Activated CD4-positive, alpha-beta T cell treated with anti-CD3 and anti-CD28 coated beads for 36 hours (primary cell): ENCODE measurements at regions of chr18 and their contacts with region 1.

Region 1: GRCh38 chr18:23487738-23488570 is 15.4 kb upstream of the RMC1 start:
- DNase-seq: peak; percentile 76
- ATAC-seq: peak; percentile 86
- H3K4me3 Mint-ChIP-seq: peak overlapping the region; percentile 59
- H3K27ac Mint-ChIP-seq: peak overlapping the region; percentile 90
- H3K4me1 Mint-ChIP-seq: peaks cover 19% of the 10 kb centered on the region
- H3K27me3 Mint-ChIP-seq: no peaks in the 10 kb centered on the region

Region 2: GRCh38 chr18:23317975-23318675 is 169.8 kb before region 1 on chr18:
- CTCF ChIA-PET with region 1: no interaction called
- POLR2A ChIA-PET with region 1: no interaction called
- intact Hi-C with region 1: no loop called
- DNase-seq: no peak
- ATAC-seq: no peak
- H3K4me3 Mint-ChIP-seq: no peak overlapping the region
- H3K27ac Mint-ChIP-seq: no peak overlapping the region
- H3K4me1 Mint-ChIP-seq: peaks cover 11% of the 10 kb centered on the region
- H3K27me3 Mint-ChIP-seq: no peaks in the 10 kb centered on the region

Region 3: DNA sequence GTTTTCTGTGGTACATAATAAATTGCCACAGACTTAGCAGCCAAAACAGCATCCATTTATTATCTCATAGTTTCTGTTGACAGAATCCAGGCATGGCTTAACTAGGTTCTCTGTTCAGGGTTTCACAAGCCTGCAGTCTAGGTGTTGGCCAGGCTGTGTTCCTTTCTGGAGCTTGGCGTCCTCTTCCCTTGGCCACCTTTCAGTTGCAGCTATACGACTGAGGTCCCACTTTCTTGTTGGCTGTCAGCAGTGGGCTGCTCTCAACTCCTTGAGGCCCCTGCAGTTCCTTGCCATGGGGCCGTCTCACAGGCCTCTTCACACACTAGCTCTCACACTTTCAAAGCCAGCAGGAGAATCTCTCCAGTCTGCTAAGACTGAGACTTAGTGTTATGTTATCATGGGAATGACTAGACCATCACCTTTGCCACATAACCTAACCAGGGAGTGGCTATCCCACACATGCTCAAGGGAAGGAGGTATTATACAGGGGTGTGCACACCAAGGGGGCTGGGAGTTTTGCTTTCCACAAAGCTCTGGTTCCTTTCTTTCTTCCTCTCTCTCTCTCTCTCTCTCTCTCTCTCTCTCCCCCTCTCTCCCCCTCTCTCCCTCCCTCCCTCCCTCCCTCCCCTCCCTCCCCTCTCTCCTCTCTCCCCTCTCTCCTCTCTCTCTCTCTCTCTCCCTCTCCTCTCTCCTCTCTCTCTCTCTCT is 19.0 kb before region 1 on chr18:
- CTCF ChIA-PET with region 1: interaction called, 11 read pairs
- POLR2A ChIA-PET with region 1: no interaction called
- intact Hi-C with region 1: no loop called
- DNase-seq: no peak
- ATAC-seq: no peak
- H3K4me3 Mint-ChIP-seq: no peak overlapping the region
- H3K27ac Mint-ChIP-seq: no peak overlapping the region
- H3K4me1 Mint-ChIP-seq: no peaks in the 10 kb centered on the region
- H3K27me3 Mint-ChIP-seq: no peaks in the 10 kb centered on the region